GM12878 (cell line): ENCODE measurements at regions of chr6 and their contacts with region 1.

Region 1: GRCh38 chr6:137754366-137754765 is 112.7 kb upstream of the TNFAIP3 start:
- DNase-seq: no peak
- ATAC-seq: peak; percentile 86
- H3K4me3 ChIP-seq: no peak overlapping the region
- H3K27ac ChIP-seq: peak overlapping the region; percentile 59
- H3K4me1 ChIP-seq: peaks cover 38% of the 10 kb centered on the region
- H3K27me3 ChIP-seq: no peaks in the 10 kb centered on the region
- CTCF ChIP-seq: no peak
- EP300 ChIP-seq: no peak
- POLR2A ChIP-seq: no peak
- RAD21 ChIP-seq: no peak

Region 2: DNA sequence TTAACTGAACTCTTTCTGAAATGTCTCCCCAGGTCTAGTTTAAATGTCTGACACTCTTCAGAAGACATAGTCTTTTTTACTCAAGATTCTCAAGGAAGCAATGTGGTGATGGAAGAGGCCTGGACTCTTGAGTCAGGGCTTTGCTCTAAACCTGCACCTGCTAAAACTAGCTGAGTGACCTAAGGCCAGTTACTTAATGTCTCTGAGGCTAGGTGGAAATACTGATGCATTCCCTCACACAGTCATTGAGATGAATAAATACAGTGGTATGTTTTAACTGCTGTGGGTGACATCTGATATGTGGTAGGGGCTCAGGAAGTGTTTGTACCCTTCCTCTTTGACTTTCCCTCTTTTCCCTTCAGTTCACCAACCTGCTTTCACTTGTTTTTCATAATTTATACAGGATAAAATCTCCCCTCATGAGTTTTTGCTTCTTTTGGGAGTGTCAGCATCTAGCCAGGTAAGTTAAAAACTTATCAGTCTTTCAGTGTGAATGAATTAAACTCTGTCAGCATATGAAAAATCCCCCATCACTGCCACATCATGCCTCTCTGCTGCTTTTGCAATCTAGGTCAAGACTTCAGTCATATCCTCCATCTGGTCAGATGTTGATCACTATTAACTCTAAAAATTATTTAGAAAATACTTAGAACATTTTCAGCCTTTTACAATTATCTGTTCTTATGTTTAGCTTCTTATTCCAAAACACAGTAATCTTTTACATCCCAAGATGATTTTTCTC is 66.0 kb before region 1 on chr6:
- CTCF ChIA-PET with region 1: no interaction called
- POLR2A ChIA-PET with region 1: no interaction called
- RAD21 ChIA-PET with region 1: no interaction called
- SMC1A ChIA-PET with region 1: no interaction called
- in situ Hi-C with region 1: no loop called
- intact Hi-C with region 1: no loop called
- DNase-seq: no peak
- ATAC-seq: no peak
- H3K4me3 ChIP-seq: no peak overlapping the region
- H3K27ac ChIP-seq: no peak overlapping the region
- H3K4me1 ChIP-seq: no peaks in the 10 kb centered on the region
- H3K27me3 ChIP-seq: no peaks in the 10 kb centered on the region
- CTCF ChIP-seq: no peak
- EP300 ChIP-seq: no peak
- POLR2A ChIP-seq: no peak
- RAD21 ChIP-seq: no peak

Region 3: GRCh38 chr6:137717074-137718073 is 37.0 kb before region 1 on chr6:
- CTCF ChIA-PET with region 1: interaction called, 4 read pairs
- POLR2A ChIA-PET with region 1: interaction called, 3 read pairs
- RAD21 ChIA-PET with region 1: interaction called, 5 read pairs
- SMC1A ChIA-PET with region 1: interaction called, 10 read pairs
- in situ Hi-C with region 1: no loop called
- intact Hi-C with region 1: no loop called
- DNase-seq: no peak
- ATAC-seq: peak; percentile 95
- H3K4me3 ChIP-seq: no peak overlapping the region
- H3K27ac ChIP-seq: no peak overlapping the region
- H3K4me1 ChIP-seq: peaks cover 8% of the 10 kb centered on the region
- H3K27me3 ChIP-seq: no peaks in the 10 kb centered on the region
- CTCF ChIP-seq: no peak
- EP300 ChIP-seq: no peak
- POLR2A ChIP-seq: no peak
- RAD21 ChIP-seq: no peak

Region 4: DNA sequence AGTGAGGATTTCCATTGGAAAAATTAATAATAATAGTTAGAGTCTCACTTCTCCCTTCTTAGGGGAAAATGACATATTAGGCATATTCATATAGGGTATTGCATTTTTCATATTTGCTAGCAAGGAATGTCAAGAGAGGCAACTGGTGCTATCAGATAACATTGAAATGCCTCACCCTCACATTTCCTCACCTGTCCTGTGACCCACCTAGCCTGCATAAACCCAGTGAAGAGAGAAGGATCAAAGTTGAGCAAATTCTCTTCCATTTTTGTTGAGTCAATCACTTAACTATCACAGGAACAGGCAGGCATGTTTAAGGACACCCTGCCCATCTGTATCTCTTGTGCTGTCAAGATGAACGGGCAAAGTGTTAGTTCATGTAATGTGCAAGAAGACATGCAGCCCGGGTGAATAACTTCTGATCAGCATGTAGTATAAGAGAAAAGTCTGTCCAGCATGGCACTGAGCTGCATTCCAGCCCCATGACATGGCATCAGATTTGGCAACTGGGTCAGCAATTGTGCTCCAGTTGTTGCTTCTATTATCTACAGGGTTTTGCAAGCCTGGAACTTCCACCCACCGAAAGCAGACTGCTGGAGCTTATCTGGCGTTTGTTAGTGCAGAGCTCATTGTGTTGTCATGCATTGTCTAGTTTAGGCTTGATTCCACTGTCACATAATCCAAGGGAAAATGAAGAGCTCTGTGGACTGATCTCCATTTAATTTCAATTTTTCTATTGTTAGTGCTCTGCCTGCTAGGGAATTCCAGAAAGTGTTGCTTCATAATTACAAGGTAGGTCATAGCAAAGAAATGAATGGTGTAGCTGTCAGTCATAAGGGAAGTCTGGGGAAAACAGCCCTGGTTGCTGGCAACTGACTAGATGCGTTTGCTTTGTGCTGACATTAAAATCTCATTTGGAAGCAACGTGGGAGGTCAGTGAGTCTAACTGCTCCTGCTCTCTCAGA is 25.7 kb before region 1 on chr6:
- CTCF ChIA-PET with region 1: interaction called, 3 read pairs
- POLR2A ChIA-PET with region 1: no interaction called
- RAD21 ChIA-PET with region 1: no interaction called
- SMC1A ChIA-PET with region 1: interaction called, 11 read pairs
- in situ Hi-C with region 1: no loop called
- intact Hi-C with region 1: no loop called
- DNase-seq: no peak
- ATAC-seq: no peak
- H3K4me3 ChIP-seq: no peak overlapping the region
- H3K27ac ChIP-seq: no peak overlapping the region
- H3K4me1 ChIP-seq: no peaks in the 10 kb centered on the region
- H3K27me3 ChIP-seq: no peaks in the 10 kb centered on the region
- CTCF ChIP-seq: no peak
- EP300 ChIP-seq: no peak
- POLR2A ChIP-seq: no peak
- RAD21 ChIP-seq: no peak

Region 5: GRCh38 chr6:137767911-137768690 is 13.7 kb after region 1 on chr6:
- CTCF ChIA-PET with region 1: interaction called, 3 read pairs
- POLR2A ChIA-PET with region 1: interaction called, 16 read pairs
- RAD21 ChIA-PET with region 1: interaction called, 7 read pairs
- SMC1A ChIA-PET with region 1: interaction called, 55 read pairs
- in situ Hi-C with region 1: no loop called
- intact Hi-C with region 1: no loop called
- DNase-seq: peak; percentile 79
- ATAC-seq: peak; percentile 85
- H3K4me3 ChIP-seq: peak overlapping the region; percentile 13
- H3K27ac ChIP-seq: peak overlapping the region; percentile 92
- H3K4me1 ChIP-seq: peaks cover 26% of the 10 kb centered on the region
- H3K27me3 ChIP-seq: no peaks in the 10 kb centered on the region
- CTCF ChIP-seq: no peak
- EP300 ChIP-seq: peak; percentile 54 to 63; a peak in 3 of 4 replicates
- POLR2A ChIP-seq: no peak
- RAD21 ChIP-seq: no peak